Activated naive CD4-positive, alpha-beta T cell treated with anti-CD3 and anti-CD28 coated beads for 36 hours (primary cell): ENCODE measurements at regions of chr10 and their contacts with region 1.

Region 1: GRCh38 chr10:46268076-46268881 is 18.5 kb upstream of the ANTXRL start:
- DNase-seq: peak; percentile 89
- H3K4me3 Mint-ChIP-seq: no peak overlapping the region
- H3K27ac Mint-ChIP-seq: no peak overlapping the region
- H3K4me1 Mint-ChIP-seq: peaks cover 54% of the 10 kb centered on the region
- H3K27me3 Mint-ChIP-seq: no peaks in the 10 kb centered on the region

Region 2: DNA sequence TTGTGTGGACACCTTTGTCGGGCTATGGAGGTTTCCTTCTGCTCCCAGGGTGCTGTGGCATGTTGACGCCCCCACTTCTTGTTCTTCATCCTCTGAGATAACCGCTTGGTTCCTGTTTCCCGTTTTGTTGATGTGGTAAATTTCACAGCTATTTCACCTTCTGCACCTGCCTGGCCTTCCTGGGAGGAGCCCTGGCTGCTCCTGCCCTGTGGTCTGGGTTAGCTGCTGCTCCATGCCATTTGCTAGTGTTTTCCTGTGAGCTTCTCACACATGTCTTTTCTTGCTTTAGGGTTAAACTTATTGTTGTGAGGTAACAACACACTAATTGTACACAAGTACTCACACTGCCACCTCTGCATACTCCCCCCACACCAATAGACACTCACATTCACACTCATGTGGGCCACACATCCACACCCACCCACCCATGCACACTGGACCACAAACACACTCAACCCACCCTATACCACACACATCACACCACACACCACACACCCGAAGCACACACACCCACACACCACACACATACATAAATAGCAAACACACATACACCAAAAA is 175.7 kb before region 1 on chr10:
- CTCF ChIA-PET with region 1: no interaction called
- intact Hi-C with region 1: loop called (anchors 5 kb)
- DNase-seq: peak; percentile 48
- H3K4me3 Mint-ChIP-seq: peak overlapping the region; percentile 11
- H3K27ac Mint-ChIP-seq: no peak overlapping the region
- H3K4me1 Mint-ChIP-seq: peaks cover 13% of the 10 kb centered on the region
- H3K27me3 Mint-ChIP-seq: no peaks in the 10 kb centered on the region

Region 3: GRCh38 chr10:46247808-46248569 is 20.3 kb before region 1 on chr10:
- CTCF ChIA-PET with region 1: interaction called, 3 read pairs
- intact Hi-C with region 1: loop called (anchors 2 kb)
- DNase-seq: no peak
- H3K4me3 Mint-ChIP-seq: no peak overlapping the region
- H3K27ac Mint-ChIP-seq: no peak overlapping the region
- H3K4me1 Mint-ChIP-seq: peaks cover 11% of the 10 kb centered on the region
- H3K27me3 Mint-ChIP-seq: no peaks in the 10 kb centered on the region

Region 4: DNA sequence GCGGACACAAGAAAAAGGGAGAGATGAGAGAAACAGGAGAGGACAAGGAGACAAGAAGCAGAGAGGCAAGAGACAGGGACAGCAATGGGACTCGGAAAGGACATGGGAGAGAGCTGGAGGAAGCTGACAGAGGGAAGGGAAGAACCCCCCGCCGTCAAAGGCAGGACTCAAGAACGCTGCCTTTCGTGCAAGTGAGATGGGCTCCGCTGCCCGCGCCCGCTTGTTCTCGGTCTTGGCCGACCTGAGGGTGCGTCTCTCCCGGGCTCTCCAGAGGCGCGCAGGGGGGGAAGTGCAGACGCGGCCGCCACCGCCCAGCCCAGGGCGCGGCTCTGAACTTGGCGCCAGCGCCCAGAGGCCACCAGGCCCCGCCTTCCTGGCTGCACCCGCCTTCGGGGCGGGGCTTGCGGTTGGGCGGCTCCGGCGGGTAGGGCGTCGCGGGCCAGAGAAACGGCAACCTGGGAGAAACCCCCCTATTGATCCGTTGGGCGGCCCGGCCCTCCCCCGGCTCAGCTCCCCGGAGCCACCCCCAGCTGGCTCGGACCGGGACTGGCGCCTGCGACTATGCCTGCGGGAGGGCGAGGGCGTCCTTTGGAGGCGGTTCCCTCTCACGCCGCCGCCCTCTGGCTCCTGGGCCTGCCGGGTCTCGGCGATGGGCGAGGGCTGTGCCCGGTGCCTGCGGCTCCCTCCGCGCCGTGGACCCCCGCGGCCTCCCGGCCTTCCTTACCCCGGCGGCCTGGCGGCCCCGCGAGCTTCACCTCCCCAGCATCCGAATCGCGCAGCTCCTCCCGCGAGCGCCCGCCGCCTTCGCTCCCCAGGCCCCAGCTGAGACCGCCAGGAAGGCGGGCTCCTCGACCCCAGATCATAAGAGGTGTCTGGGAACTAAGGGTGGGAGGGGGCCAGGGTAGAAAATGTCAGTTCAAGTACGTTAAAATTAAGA is 16.3 kb after region 1 on chr10:
- CTCF ChIA-PET with region 1: interaction called, 4 read pairs
- intact Hi-C with region 1: loop called (anchors 1 kb)
- DNase-seq: peak; percentile 81
- H3K4me3 Mint-ChIP-seq: peak overlapping the region; percentile 91
- H3K27ac Mint-ChIP-seq: peak overlapping the region; percentile 32
- H3K4me1 Mint-ChIP-seq: peaks cover 19% of the 10 kb centered on the region
- H3K27me3 Mint-ChIP-seq: no peaks in the 10 kb centered on the region

Region 5: DNA sequence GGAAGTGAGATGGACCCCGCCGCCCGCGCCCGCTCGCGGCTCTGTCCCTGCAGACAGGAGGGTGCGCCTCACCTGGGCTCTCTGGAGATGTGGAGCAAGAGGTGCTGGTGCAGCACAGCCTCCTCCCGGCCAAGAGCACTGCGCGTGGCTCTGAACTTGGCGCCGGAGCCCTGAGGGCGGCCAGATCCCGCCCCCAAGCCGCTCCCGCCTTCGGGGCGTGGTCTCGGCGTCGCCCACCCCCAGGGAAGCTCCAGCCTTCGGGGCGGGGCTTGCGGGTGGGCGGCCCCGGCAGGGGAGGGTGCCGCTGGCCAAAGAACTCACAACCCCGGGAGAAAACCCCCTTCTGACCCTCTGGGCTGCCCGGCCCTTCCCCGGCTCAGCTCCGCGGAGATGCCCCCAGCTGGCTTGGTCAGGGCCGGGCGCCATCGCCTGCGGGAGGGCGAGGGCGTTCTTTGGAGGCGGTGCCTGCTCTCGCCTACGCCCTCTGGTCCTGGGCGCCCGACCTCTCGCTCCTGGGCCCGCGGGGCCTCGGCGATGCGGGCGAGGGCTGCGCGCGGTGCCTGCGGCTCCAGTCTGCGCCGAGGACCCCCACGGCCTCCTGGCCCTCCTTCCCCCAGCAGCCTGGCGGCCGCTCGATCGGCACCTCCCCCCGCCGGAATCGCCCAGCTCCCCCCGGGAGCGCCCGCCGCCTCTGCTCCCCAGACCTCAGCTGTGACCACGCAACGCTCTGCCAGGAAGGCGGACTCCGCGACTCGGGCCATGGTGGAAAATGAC is 1116.1 kb after region 1 on chr10 and contains the start of gene ZNF488:
- CTCF ChIA-PET with region 1: no interaction called
- intact Hi-C with region 1: loop called (anchors 5 kb)
- DNase-seq: peak; percentile 74
- H3K4me3 Mint-ChIP-seq: peak within 1 kb of the TSS; percentile 84
- H3K27ac Mint-ChIP-seq: no peak within 1 kb of the TSS
- H3K4me1 Mint-ChIP-seq: peaks cover 10% of the 10 kb centered on the region
- H3K27me3 Mint-ChIP-seq: peaks cover 32% of the 10 kb centered on the region
- total RNA-seq, gene ZNF488: 0.84 to 0.93 TPM